ENCODE measurements at regions of chr5 and their contacts with region 1.

Region 1: DNA sequence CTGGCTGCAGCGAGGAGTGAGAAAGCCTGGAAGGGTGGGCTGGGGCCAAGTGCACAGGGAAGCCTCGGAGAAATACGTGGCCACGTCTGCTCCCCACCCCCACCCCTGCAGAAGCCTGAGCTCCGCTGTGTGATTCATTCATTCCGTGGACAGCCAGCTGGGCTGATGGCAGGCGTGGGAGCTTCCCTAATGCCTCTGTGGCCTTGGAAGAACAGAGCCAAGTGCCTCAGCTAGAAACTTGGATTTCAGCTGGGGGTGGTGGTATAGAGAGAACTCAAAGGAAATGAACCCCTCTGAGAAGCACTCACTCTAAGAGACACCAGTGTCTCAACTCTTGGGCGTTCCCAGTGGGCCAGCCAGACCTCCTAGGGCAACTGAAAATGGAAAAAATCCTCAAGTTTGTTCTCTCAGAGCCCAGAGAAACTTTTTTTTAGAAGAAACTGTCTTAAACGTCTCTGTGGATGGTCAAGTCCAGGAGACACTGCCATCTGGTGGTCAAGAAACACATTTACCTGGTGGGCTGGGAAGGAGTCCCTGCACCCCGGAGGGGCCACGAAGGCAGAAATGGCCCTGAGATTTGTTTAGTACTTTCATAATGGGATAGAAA is 18.0 kb downstream of the ATOX1 start:
- DNase-seq: peak; percentile 80
- H3K4me3 Mint-ChIP-seq: peak overlapping the region; percentile 45
- H3K27ac Mint-ChIP-seq: peak overlapping the region; percentile 86
- H3K4me1 Mint-ChIP-seq: peaks cover 55% of the 10 kb centered on the region
- H3K27me3 Mint-ChIP-seq: no peaks in the 10 kb centered on the region
- CTCF ChIP-seq: peak; percentile 93

Region 2: DNA sequence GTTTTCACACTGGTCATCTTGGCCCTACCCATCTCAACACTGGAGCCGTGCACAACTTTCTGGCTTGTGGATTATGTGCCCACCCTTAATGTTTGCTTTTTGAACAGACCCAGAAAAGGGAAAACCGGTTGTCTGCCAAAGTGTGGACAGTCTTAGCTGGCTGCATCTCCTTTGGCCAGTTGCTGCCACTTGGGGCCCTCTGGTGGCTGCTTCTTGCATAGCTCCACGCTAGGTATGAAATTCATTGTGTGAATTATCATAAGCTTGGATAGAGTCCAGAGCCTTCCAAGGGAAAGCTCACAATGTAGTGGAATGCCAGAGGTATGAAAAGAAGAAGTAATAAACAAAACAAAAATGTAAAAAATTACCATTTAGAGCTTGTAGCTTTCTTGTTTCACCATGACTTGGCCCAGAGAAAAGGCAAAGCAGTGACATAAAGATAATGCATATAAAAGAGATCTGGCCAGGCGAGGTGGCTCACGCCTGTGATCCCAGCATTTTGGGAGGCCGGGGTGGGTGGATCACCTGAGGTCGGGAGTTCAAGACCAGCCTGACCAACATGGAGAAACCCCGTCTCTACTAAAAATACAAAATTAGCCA is 424.3 kb before region 1 on chr5:
- CTCF ChIA-PET with region 1: no interaction called
- POLR2A ChIA-PET with region 1: no interaction called
- intact Hi-C with region 1: loop called (anchors 5 kb)
- DNase-seq: peak; percentile 88
- H3K4me3 Mint-ChIP-seq: no peak overlapping the region
- H3K27ac Mint-ChIP-seq: no peak overlapping the region
- H3K4me1 Mint-ChIP-seq: no peaks in the 10 kb centered on the region
- H3K27me3 Mint-ChIP-seq: peaks cover 13% of the 10 kb centered on the region
- CTCF ChIP-seq: peak; percentile 97

Region 3: GRCh38 chr5:151499501-151500035 is 240.9 kb before region 1 on chr5:
- CTCF ChIA-PET with region 1: interaction called, 5 read pairs
- POLR2A ChIA-PET with region 1: no interaction called
- intact Hi-C with region 1: loop called (anchors 2 kb)
- DNase-seq: peak; percentile 46
- H3K4me3 Mint-ChIP-seq: no peak overlapping the region
- H3K27ac Mint-ChIP-seq: no peak overlapping the region
- H3K4me1 Mint-ChIP-seq: no peaks in the 10 kb centered on the region
- H3K27me3 Mint-ChIP-seq: no peaks in the 10 kb centered on the region
- CTCF ChIP-seq: no peak

Region 4: GRCh38 chr5:151675611-151676313 is 64.7 kb before region 1 on chr5:
- CTCF ChIA-PET with region 1: interaction called, 89 read pairs
- POLR2A ChIA-PET with region 1: no interaction called
- intact Hi-C with region 1: no loop called
- DNase-seq: no peak
- H3K4me3 Mint-ChIP-seq: no peak overlapping the region
- H3K27ac Mint-ChIP-seq: no peak overlapping the region
- H3K4me1 Mint-ChIP-seq: peaks cover 13% of the 10 kb centered on the region
- H3K27me3 Mint-ChIP-seq: no peaks in the 10 kb centered on the region
- CTCF ChIP-seq: no peak

Region 5: DNA sequence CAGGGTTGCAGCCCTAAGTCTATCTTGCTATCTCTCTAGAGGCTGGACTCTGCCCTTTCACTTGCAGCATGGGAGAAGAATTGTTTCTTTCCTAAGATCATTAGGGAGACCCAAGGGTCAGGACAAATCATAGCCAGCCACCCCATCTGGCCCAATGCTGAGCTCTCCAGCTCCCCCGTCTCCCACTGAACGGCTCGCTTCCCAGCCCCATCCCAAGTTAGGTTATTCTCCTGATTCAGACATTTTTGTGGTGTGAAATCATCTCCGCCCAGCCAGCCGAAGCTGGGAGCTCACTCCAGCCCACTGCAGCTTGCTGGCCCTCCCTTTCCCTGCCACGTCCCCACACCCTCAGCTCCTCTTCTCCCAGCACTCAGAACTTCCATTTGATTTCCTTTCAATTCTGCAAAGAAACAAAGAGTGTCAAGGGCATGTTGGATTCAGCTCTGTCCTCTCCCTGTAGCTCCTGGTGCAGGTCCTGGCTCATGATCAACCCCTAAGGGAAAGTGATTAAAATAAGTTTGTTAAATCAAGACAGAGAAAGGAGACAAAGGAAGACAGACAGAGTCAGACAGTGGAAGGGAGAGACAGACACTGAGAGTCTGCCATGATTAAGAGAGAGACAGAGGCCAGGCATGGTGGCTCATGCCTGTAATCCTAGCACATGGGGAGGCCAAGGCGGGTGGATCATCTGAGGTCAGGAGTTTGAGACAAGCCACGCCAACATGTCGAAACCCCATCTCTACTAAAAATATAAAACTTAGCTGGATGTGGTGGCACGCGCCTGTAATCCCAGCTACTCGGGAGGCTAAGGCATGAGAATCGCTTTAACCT is 41.2 kb before region 1 on chr5:
- CTCF ChIA-PET with region 1: interaction called, 68 read pairs
- POLR2A ChIA-PET with region 1: interaction called, 5 read pairs
- intact Hi-C with region 1: no loop called
- DNase-seq: peak; percentile 85
- H3K4me3 Mint-ChIP-seq: peak overlapping the region; percentile 13
- H3K27ac Mint-ChIP-seq: peak overlapping the region; percentile 58
- H3K4me1 Mint-ChIP-seq: peaks cover 18% of the 10 kb centered on the region
- H3K27me3 Mint-ChIP-seq: no peaks in the 10 kb centered on the region
- CTCF ChIP-seq: no peak

Region 6: GRCh38 chr5:151730384-151730783 is 10.1 kb before region 1 on chr5:
- CTCF ChIA-PET with region 1: interaction called, 31 read pairs
- POLR2A ChIA-PET with region 1: no interaction called
- intact Hi-C with region 1: no loop called
- DNase-seq: no peak
- H3K4me3 Mint-ChIP-seq: no peak overlapping the region
- H3K27ac Mint-ChIP-seq: no peak overlapping the region
- H3K4me1 Mint-ChIP-seq: no peaks in the 10 kb centered on the region
- H3K27me3 Mint-ChIP-seq: no peaks in the 10 kb centered on the region
- CTCF ChIP-seq: no peak

Region 7: GRCh38 chr5:151771259-151772028 is 31.0 kb after region 1 on chr5 and contains the start of gene G3BP1:
- CTCF ChIA-PET with region 1: interaction called, 18 read pairs
- POLR2A ChIA-PET with region 1: interaction called, 80 read pairs
- intact Hi-C with region 1: loop called (anchors 1 kb)
- DNase-seq: peak; percentile 100
- H3K4me3 Mint-ChIP-seq: no peak within 1 kb of the TSS
- H3K27ac Mint-ChIP-seq: no peak within 1 kb of the TSS
- H3K4me1 Mint-ChIP-seq: peaks cover 13% of the 10 kb centered on the region
- H3K27me3 Mint-ChIP-seq: no peaks in the 10 kb centered on the region
- CTCF ChIP-seq: peak; percentile 67
- total RNA-seq, gene G3BP1: 279 and 282 TPM in 2 replicates

Measured in MCF 10A (cell line).